Ascending aorta (tissue), 2 donors: ENCODE measurements at regions of chr19 and their contacts with region 1.

Region 1: DNA sequence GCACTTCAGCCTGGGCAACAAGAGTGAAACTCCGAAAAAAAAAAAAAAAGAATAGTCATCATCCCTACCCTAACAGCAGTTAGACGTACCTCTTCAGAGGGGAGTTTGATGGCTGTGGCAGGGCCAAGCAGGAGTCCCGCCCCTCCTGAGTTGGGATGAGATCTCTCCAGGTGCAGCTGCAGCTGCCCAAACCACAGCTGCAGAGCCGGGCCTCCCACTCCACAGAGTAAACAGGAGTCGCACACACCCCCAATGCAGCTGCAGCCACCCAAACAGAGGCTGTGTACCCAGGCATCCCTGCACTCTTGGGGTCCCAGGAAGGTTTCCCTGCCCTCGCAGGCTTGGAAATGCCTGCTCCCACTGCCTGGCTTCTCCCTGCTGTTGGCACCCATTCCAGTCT is 17.4 kb upstream of the MLLT1 start:
- DNase-seq: no peak
- H3K4me3 ChIP-seq: no peak overlapping the region
- H3K27ac ChIP-seq: no peak overlapping the region
- H3K4me1 ChIP-seq: no peaks in the 10 kb centered on the region
- H3K27me3 ChIP-seq: no peaks in the 10 kb centered on the region
- CTCF ChIP-seq: no peak

Region 2: GRCh38 chr19:6161271-6161850 is 135.8 kb before region 1 on chr19:
- intact Hi-C with region 1: loop called (anchors 1 kb)
- DNase-seq: peak in 1 of 2 donors; percentile 58
- H3K4me3 ChIP-seq: no peak overlapping the region
- H3K27ac ChIP-seq: no peak overlapping the region
- H3K4me1 ChIP-seq: no peaks in the 10 kb centered on the region
- H3K27me3 ChIP-seq: no peaks in the 10 kb centered on the region
- CTCF ChIP-seq: no peak

Region 3: GRCh38 chr19:6312018-6312417 is 14.8 kb after region 1 on chr19:
- intact Hi-C with region 1: no loop called
- DNase-seq: no peak
- H3K4me3 ChIP-seq: no peak overlapping the region
- H3K27ac ChIP-seq: no peak overlapping the region
- H3K4me1 ChIP-seq: no peaks in the 10 kb centered on the region
- H3K27me3 ChIP-seq: no peaks in the 10 kb centered on the region
- CTCF ChIP-seq: no peak

Region 4: GRCh38 chr19:6393074-6393983 is 96.1 kb after region 1 on chr19 and contains the start of gene GTF2F1:
- intact Hi-C with region 1: no loop called
- DNase-seq: peak; percentile 76 to 97
- H3K4me3 ChIP-seq: peak within 1 kb of the TSS; percentile 74 to 75
- H3K27ac ChIP-seq: peak within 1 kb of the TSS; percentile 94
- H3K4me1 ChIP-seq: peaks cover 9 to 14% of the 10 kb centered on the region in 2 donors
- H3K27me3 ChIP-seq: no peaks in the 10 kb centered on the region
- CTCF ChIP-seq: peak in 1 of 3 experiments; percentile 25
- total RNA-seq, gene GTF2F1: 67.9 TPM